Right ventricle myocardium inferior (tissue), 1 donor: ENCODE measurements at regions of chr21 and their contacts with region 1.

Region 1: DNA sequence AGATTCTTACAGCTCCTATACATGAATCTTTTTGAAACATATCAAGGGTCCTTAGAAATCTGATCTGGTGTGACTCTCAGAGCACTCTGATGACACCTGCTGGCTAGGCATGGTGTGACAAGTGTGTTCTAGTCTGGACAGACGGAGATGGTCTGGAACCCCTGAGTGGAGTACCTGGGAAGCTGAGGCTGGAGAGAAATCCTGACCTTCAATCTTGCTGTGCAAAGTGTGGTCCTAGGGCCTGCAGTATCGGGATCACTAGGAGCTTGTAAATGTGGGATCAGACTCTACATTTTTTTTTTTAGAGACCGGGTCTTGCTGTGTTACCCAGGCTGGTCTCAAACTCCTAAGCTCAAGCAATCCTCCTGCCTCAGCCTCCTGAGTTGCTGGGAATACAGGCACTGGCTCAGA is 78.6 kb upstream of the SOD1 start:
- DNase-seq: no peak
- ATAC-seq: peak; percentile 64

Region 2: GRCh38 chr21:31098576-31099005 is 482.3 kb before region 1 on chr21:
- intact Hi-C with region 1: loop called (anchors 5 kb)
- DNase-seq: peak; percentile 82
- ATAC-seq: peak; percentile 44

Region 3: GRCh38 chr21:31198575-31198974 is 382.3 kb before region 1 on chr21:
- intact Hi-C with region 1: loop called (anchors 2 kb)
- DNase-seq: no peak
- ATAC-seq: no peak

Region 4: DNA sequence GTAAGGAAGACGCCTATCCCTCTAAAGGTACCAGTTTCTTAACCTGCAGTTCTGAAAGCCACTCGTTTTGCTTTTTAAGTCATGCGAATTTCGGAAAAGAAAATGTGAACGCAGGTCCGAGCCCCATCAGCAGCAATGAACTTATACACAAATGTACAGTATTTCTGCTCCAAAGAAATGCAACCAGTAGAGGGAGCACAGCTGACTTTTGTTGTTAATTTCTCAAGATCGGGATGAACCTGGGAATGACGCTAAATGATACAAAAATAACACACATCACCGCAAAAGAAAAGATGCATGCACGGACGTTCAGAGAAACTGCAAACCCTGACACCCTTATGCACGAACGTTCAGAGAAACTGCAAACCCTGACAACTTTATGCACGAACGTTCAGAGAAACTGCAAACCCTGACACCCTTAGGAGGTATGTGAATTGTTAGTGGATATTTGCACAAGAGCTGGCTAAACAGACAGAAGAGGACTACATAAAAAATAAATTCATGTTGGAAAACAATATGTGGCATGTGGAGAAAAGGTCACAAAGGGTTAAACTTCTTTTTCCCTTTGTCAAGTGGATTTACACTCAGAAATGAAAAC is 233.3 kb before region 1 on chr21:
- intact Hi-C with region 1: loop called (anchors 2 kb)
- DNase-seq: no peak
- ATAC-seq: no peak